ENCODE measurements at regions of chr21 and their contacts with region 1.

Region 1: DNA sequence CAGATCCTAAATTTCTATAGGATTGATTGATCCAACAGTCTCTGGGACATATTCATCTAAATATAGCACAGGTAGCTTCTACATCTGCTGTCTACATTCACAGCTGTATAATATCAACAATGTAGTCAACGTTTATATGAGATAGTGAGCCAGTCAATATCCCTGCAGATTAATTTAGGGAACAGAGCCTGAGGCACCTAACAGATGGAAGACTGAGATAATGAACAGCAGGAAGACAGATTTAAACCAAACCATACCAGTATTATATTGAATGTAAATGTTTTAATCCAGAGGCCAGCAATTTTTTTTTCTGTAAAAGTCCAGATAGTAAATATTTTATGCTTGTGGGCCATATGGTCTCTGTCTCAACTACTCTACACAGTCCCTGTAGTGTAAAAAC is 2072.4 kb downstream of the MRPL39 start:
- DNase-seq: no peak
- H3K4me3 ChIP-seq: no peak overlapping the region
- H3K27ac ChIP-seq: no peak overlapping the region
- H3K4me1 ChIP-seq: no peaks in the 10 kb centered on the region
- H3K27me3 ChIP-seq: no peaks in the 10 kb centered on the region
- CTCF ChIP-seq: no peak
- EP300 ChIP-seq: no peak
- POLR2A ChIP-seq: no peak

Region 2: DNA sequence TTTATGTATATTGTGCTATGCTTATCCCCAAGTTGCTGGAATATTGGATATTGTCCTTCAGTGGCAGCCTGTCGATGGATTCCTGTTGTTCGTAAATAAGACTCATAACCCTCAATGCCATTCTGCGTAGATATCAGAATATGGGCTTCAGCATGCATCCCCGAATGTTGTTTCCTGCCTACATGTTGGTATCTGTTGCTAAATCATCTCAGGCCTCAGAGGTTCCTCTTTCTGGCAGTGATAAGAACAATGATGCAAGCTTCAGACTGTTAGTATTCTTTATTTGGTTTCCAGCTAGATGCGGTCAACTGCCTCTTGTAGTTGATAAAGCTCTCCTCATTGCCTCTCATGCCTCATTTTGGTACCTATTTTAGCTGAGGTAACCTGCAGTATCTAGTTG is 10.2 kb before region 1 on chr21:
- in situ Hi-C with region 1: no loop called
- intact Hi-C with region 1: loop called (anchors 1 kb)
- DNase-seq: no peak
- H3K4me3 ChIP-seq: no peak overlapping the region
- H3K27ac ChIP-seq: no peak overlapping the region
- H3K4me1 ChIP-seq: no peaks in the 10 kb centered on the region
- H3K27me3 ChIP-seq: no peaks in the 10 kb centered on the region
- CTCF ChIP-seq: no peak
- EP300 ChIP-seq: no peak
- POLR2A ChIP-seq: no peak

Measured in transverse colon (tissue), 4 donors.